Activated naive CD4-positive, alpha-beta T cell treated with anti-CD3 and anti-CD28 coated beads for 36 hours (primary cell): ENCODE measurements at regions of chr15 and their contacts with region 1.

Region 1: GRCh38 chr15:66472176-66472999 is 25.2 kb downstream of the SNAPC5 start:
- DNase-seq: peak; percentile 82
- H3K4me3 Mint-ChIP-seq: peak overlapping the region; percentile 66
- H3K27ac Mint-ChIP-seq: peak overlapping the region; percentile 80
- H3K4me1 Mint-ChIP-seq: peaks cover 62% of the 10 kb centered on the region
- H3K27me3 Mint-ChIP-seq: no peaks in the 10 kb centered on the region

Region 2: GRCh38 chr15:66401130-66402021 is 71.0 kb before region 1 on chr15:
- CTCF ChIA-PET with region 1: interaction called, 3 read pairs
- intact Hi-C with region 1: loop called (anchors 2 kb)
- DNase-seq: peak; percentile 51
- H3K4me3 Mint-ChIP-seq: peak overlapping the region; percentile 59
- H3K27ac Mint-ChIP-seq: peak overlapping the region; percentile 81
- H3K4me1 Mint-ChIP-seq: peaks cover 77% of the 10 kb centered on the region
- H3K27me3 Mint-ChIP-seq: no peaks in the 10 kb centered on the region